Activated CD4-positive, alpha-beta T cell treated with anti-CD3 and anti-CD28 coated beads for 36 hours (primary cell): ENCODE measurements at regions of chr5 and their contacts with region 1.

Region 1: DNA sequence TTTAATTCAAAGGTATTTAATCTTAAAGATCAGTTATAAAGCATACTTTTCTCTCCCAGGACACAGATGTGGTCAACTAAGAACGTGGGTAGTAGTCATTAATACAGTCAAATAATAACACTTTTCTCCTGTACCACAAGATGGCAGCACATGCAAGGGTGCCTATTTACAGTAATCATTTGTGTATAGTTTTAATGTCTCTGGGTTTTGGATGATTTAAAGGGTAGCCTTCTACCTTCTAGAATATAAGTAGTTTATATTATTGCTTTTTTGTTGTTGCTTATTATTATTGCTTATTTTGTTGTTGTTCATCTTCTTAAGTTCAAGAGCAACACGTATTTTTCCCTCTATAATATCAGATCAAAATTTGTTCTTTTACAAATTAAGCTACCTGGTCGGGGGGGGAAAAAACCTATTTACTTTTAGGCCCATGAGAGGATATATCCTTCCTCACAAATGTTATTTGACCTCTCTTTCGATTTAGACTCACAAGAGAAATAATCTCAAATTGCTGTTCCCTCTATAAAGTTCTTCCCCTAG is 59.6 kb upstream of the SLC27A6 start:
- DNase-seq: peak; percentile 52
- ATAC-seq: peak; percentile 47
- H3K4me3 Mint-ChIP-seq: no peak overlapping the region
- H3K27ac Mint-ChIP-seq: no peak overlapping the region
- H3K4me1 Mint-ChIP-seq: no peaks in the 10 kb centered on the region
- H3K27me3 Mint-ChIP-seq: peaks cover 4% of the 10 kb centered on the region

Region 2: DNA sequence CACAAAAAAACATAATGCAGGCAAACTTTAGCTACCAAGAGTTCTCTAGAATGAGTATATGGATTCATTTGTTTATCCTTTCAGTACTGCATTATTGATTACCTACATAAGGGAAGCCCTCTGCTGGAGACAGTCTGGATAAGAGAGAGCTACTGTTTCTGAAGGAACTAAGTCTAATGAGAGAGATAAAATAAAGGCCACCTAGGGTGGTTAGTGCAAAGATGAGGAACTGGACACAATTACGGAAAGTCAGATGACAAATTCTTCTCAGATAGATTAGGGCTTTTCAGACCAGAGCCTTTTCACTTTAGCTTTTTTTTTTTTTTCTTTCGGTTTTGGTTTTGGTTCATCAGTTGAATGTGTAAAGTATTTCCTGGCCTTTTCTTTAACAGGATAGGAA is 220.2 kb after region 1 on chr5:
- CTCF ChIA-PET with region 1: interaction called, 3 read pairs
- POLR2A ChIA-PET with region 1: no interaction called
- intact Hi-C with region 1: loop called (anchors 1 to 5 kb)
- DNase-seq: no peak
- ATAC-seq: peak; percentile 57
- H3K4me3 Mint-ChIP-seq: no peak overlapping the region
- H3K27ac Mint-ChIP-seq: peak overlapping the region; percentile 42
- H3K4me1 Mint-ChIP-seq: peaks cover 11% of the 10 kb centered on the region
- H3K27me3 Mint-ChIP-seq: no peaks in the 10 kb centered on the region

Region 3: GRCh38 chr5:129135633-129136032 is 230.0 kb after region 1 on chr5:
- CTCF ChIA-PET with region 1: interaction called, 3 read pairs
- POLR2A ChIA-PET with region 1: no interaction called
- intact Hi-C with region 1: loop called in 1 of 2 experiments (anchors 2 kb)
- DNase-seq: peak; percentile 22
- ATAC-seq: peak; percentile 72
- H3K4me3 Mint-ChIP-seq: no peak overlapping the region
- H3K27ac Mint-ChIP-seq: no peak overlapping the region
- H3K4me1 Mint-ChIP-seq: no peaks in the 10 kb centered on the region
- H3K27me3 Mint-ChIP-seq: no peaks in the 10 kb centered on the region

Region 4: GRCh38 chr5:129163810-129164378 is 258.3 kb after region 1 on chr5:
- CTCF ChIA-PET with region 1: no interaction called
- POLR2A ChIA-PET with region 1: no interaction called
- intact Hi-C with region 1: no loop called
- DNase-seq: no peak
- ATAC-seq: no peak
- H3K4me3 Mint-ChIP-seq: no peak overlapping the region
- H3K27ac Mint-ChIP-seq: no peak overlapping the region
- H3K4me1 Mint-ChIP-seq: no peaks in the 10 kb centered on the region
- H3K27me3 Mint-ChIP-seq: no peaks in the 10 kb centered on the region

Region 5: GRCh38 chr5:129664337-129664937 is 758.8 kb after region 1 on chr5:
- CTCF ChIA-PET with region 1: no interaction called
- POLR2A ChIA-PET with region 1: no interaction called
- intact Hi-C with region 1: loop called in 1 of 2 experiments (anchors 10 kb)
- DNase-seq: peak; percentile 62
- ATAC-seq: no peak
- H3K4me3 Mint-ChIP-seq: no peak overlapping the region
- H3K27ac Mint-ChIP-seq: no peak overlapping the region
- H3K4me1 Mint-ChIP-seq: no peaks in the 10 kb centered on the region
- H3K27me3 Mint-ChIP-seq: peaks cover 3% of the 10 kb centered on the region

Region 6: GRCh38 chr5:129852747-129853352 is 947.2 kb after region 1 on chr5:
- CTCF ChIA-PET with region 1: no interaction called
- POLR2A ChIA-PET with region 1: no interaction called
- intact Hi-C with region 1: loop called in 1 of 2 experiments (anchors 5 kb)
- DNase-seq: peak; percentile 87
- ATAC-seq: peak; percentile 85
- H3K4me3 Mint-ChIP-seq: no peak overlapping the region
- H3K27ac Mint-ChIP-seq: no peak overlapping the region
- H3K4me1 Mint-ChIP-seq: no peaks in the 10 kb centered on the region
- H3K27me3 Mint-ChIP-seq: peaks cover 14% of the 10 kb centered on the region